CD8-positive, alpha-beta T cell (primary cell): ENCODE measurements at regions of chr3 and their contacts with region 1.

Region 1: DNA sequence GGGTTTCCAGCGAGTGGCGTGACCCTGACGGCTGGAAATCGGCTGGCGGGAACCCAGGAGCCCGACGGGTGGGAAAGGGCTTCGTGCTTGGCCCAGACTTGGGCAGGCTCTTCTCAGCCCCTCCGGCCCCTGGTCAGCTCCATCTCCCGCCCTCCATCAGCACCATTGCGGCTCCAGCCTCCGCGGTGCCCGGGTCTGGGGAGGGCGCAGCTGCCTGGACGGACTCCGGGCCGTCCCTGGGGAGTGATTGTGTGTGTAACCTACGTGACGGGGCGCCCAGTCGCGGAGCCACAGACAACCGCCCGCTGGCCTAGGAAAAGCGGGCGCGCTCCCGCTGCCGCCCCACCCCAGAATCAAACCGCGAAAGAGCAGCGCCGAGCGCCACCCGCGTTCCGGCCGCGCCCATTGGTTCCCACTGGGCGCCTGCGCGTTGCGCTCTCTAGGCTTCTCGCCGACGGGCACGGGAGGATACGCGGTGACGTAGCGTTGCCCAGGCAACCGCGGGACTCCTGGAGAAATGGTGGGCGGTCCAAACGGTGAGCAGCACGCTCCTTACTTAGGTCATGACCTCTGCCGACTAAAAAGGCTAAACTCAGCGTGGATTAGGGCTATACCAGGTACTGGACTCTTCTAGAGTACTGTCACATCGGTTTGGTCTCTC is at the start of gene CFAP20DC:
- DNase-seq: peak; percentile 73 to 94 (median 82)
- ATAC-seq: peak; percentile 95
- H3K4me3 ChIP-seq: peak within 1 kb of the TSS; percentile 61 to 72
- H3K4me3 Mint-ChIP-seq: peak within 1 kb of the TSS; percentile 77
- H3K27ac ChIP-seq: peak within 1 kb of the TSS; percentile 41 to 42
- H3K27ac Mint-ChIP-seq: peak within 1 kb of the TSS; percentile 50
- H3K4me1 ChIP-seq: no peaks in the 10 kb centered on the region
- H3K4me1 Mint-ChIP-seq: peaks cover 3% of the 10 kb centered on the region
- H3K27me3 ChIP-seq: no peaks in the 10 kb centered on the region
- H3K27me3 Mint-ChIP-seq: no peaks in the 10 kb centered on the region
- CTCF ChIP-seq: no peak
- total RNA-seq, gene CFAP20DC: 0.25 TPM in 1 of 2 experiments, not detected in the other

Region 2: DNA sequence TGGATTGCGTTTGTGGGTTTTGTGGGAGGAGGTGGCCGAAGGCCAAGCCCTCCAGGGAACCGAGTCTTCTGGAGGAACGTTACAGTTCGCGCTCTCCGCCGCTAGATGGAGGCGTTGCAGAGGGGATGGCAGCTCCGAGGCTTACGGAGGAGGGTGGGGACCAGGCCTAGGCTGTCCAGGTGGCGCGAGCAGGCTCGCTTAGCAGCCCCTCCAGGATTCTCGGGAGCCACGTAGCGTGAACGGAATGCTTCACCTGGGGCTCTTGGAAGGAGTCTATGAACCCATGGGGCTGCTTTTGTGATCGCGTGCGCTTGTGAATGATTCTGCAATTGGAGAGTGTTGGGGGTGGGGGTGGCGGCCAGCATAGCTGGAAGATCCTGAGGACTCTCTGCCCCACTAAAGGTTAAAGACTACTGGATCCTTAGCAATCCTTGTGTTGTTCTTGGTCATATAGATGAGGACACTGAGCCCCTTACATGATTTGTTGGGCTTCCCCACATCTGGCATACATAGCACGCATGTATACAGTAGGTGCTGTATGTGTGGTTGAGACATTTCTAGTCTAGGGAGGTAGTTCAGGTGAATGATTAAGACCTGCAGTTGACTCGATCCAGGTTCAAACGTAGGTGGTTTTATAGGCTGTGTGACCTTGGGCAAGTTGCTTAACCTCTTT is 409.0 kb before region 1 on chr3:
- CTCF ChIA-PET with region 1: interaction called, 4 read pairs
- POLR2A ChIA-PET with region 1: no interaction called
- intact Hi-C with region 1: loop called in 1 of 2 experiments (anchors 5 kb)
- DNase-seq: peak; percentile 10 to 61 (median 37)
- ATAC-seq: no peak
- H3K4me3 ChIP-seq: no peak overlapping the region
- H3K4me3 Mint-ChIP-seq: no peak overlapping the region
- H3K27ac ChIP-seq: no peak overlapping the region
- H3K27ac Mint-ChIP-seq: no peak overlapping the region
- H3K4me1 ChIP-seq: peaks cover 5% of the 10 kb centered on the region
- H3K4me1 Mint-ChIP-seq: no peaks in the 10 kb centered on the region
- H3K27me3 ChIP-seq: no peaks in the 10 kb centered on the region
- H3K27me3 Mint-ChIP-seq: peaks cover 1% of the 10 kb centered on the region
- CTCF ChIP-seq: peak; percentile 54

Region 3: DNA sequence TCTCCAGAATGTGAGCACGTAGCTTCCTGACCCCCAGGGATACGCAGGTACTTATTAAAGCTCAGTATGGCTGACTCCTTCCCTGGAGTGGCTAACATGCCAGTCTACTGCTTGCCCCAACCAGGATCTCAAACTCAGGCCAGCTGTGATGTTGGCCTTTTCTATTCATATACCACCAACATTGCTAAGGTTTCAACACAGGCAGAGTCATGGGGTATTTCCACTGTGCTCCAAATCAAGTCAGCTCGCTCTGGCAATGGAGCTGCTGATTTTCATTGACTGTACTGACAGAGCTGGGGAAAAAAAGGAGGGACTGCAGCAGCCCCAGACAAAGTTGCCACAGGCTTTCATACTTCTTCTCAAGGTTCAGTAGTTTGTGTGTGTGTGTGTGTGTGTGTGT is 87.0 kb before region 1 on chr3:
- CTCF ChIA-PET with region 1: no interaction called
- POLR2A ChIA-PET with region 1: no interaction called
- intact Hi-C with region 1: no loop called
- DNase-seq: no peak
- ATAC-seq: no peak
- H3K4me3 ChIP-seq: no peak overlapping the region
- H3K4me3 Mint-ChIP-seq: no peak overlapping the region
- H3K27ac ChIP-seq: no peak overlapping the region
- H3K27ac Mint-ChIP-seq: no peak overlapping the region
- H3K4me1 ChIP-seq: no peaks in the 10 kb centered on the region
- H3K4me1 Mint-ChIP-seq: no peaks in the 10 kb centered on the region
- H3K27me3 ChIP-seq: no peaks in the 10 kb centered on the region
- H3K27me3 Mint-ChIP-seq: no peaks in the 10 kb centered on the region
- CTCF ChIP-seq: no peak

Region 4: DNA sequence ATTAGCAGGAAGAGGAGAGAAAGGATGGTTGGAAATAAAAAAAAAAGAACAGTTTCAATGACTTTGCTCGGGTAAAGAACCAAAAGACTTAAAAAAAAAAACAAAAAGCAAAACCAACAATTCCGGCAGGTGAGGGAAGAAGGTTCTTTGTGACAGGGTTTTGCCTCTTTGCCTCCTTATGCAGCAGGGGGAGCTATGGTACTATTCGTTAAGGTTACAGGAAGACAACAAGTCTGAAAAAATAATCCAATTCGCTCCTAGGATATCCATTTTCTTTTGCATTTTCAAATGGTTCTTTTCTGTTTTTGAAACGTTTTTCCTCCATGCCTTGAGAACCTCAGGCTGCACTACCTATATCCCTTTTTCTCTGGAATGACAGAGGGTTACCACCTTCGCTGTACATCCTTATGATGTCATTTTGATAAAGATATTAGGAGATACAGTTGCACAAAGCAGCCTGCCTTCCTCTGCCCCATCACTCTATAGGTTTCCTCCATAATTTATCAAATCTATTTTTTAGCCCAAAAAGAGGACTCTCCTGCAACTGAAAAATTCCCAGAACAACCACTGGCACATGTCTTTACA is 55.0 kb before region 1 on chr3:
- CTCF ChIA-PET with region 1: interaction called, 4 read pairs
- POLR2A ChIA-PET with region 1: no interaction called
- intact Hi-C with region 1: loop called in 1 of 2 experiments (anchors 1 kb)
- DNase-seq: peak in 3 of 9 experiments; percentile 6 to 60 (median 37)
- ATAC-seq: no peak
- H3K4me3 ChIP-seq: no peak overlapping the region
- H3K4me3 Mint-ChIP-seq: no peak overlapping the region
- H3K27ac ChIP-seq: no peak overlapping the region
- H3K27ac Mint-ChIP-seq: no peak overlapping the region
- H3K4me1 ChIP-seq: no peaks in the 10 kb centered on the region
- H3K4me1 Mint-ChIP-seq: peaks cover 4% of the 10 kb centered on the region
- H3K27me3 ChIP-seq: peaks cover 0 to 3% of the 10 kb centered on the region in 2 experiments
- H3K27me3 Mint-ChIP-seq: peaks cover 14% of the 10 kb centered on the region
- CTCF ChIP-seq: peak; percentile 43